OCI-LY7 (cell line): ENCODE measurements at regions of chrX and their contacts with region 1.

Region 1: DNA sequence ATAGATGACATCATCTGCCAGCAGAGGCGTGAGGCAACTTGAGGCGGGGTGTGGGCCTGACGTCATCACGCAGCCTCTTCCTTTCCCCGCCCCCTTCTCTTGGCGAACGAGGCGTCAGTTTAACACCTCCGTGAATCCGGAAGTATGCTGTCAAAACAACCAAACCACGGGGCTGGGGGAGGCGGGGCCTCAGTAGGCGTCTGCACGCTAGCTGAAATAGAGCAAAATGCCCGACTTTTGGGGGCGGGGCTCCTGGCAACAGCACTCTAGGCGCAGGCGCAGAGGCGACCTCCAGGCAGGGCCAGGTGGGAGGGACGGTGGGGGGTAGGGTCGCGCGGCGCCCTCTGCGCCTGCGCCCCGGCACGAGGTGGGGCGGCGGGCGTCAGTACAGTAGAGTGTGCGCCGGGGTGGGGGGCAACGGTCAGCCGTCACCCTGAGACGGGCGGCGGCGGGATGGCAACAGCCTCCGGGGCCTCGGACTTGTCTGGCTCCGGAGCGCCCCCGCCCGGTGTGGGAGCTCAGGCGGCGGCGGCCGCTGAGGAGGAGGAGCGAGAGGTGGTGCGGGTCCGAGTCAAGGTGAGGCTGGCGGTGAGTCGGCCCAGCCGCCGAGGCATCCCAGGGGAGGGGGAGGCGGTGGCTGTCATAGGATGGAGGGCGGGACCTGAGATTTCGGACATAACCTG is at the start of gene TBC1D25:
- DNase-seq: peak; percentile 98
- H3K4me3 ChIP-seq: peak within 1 kb of the TSS; percentile 80
- H3K27ac ChIP-seq: peak within 1 kb of the TSS; percentile 69
- H3K4me1 ChIP-seq: peaks cover 17% of the 10 kb centered on the region
- CTCF ChIP-seq: peak; percentile 66
- total RNA-seq, gene TBC1D25: 6.8 and 7.6 TPM in 2 replicates

Region 2: GRCh38 chrX:48468693-48469691 is 70.5 kb before region 1 on chrX:
- CTCF ChIA-PET with region 1: interaction called, 4 read pairs
- POLR2A ChIA-PET with region 1: interaction called, 6 read pairs
- intact Hi-C with region 1: loop called (anchors 5 kb)
- DNase-seq: peak; percentile 66
- H3K4me3 ChIP-seq: peak overlapping the region; percentile 94
- H3K27ac ChIP-seq: peak overlapping the region; percentile 64
- H3K4me1 ChIP-seq: peaks cover 16% of the 10 kb centered on the region
- CTCF ChIP-seq: peak; percentile 81

Region 3: DNA sequence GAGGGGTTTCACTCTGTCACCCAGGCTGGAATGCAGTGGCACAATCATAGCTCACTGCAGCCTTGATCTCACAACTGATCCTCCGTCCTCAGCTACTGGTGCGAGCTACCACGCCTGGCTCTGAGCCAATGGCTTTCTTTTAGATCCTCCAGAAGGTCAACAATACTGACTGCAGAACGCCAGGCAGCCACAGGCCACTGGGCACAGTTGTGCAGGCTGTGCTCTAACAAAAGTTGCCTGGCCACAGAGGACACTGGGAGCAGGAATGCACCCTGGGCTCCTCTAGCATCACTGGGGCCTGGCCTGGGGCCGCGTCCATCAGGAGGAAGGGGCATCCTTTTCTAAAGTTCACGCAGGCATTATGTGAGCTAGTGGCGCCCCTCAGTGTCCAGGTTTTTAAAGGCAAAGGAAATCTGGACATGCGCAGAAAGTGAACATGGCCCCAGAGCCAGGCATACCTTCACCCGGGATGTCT is 45.6 kb before region 1 on chrX:
- CTCF ChIA-PET with region 1: no interaction called
- POLR2A ChIA-PET with region 1: no interaction called
- intact Hi-C with region 1: no loop called
- DNase-seq: no peak
- H3K4me3 ChIP-seq: no peak overlapping the region
- H3K27ac ChIP-seq: no peak overlapping the region
- H3K4me1 ChIP-seq: no peaks in the 10 kb centered on the region
- CTCF ChIP-seq: peak; percentile 54

Region 4: DNA sequence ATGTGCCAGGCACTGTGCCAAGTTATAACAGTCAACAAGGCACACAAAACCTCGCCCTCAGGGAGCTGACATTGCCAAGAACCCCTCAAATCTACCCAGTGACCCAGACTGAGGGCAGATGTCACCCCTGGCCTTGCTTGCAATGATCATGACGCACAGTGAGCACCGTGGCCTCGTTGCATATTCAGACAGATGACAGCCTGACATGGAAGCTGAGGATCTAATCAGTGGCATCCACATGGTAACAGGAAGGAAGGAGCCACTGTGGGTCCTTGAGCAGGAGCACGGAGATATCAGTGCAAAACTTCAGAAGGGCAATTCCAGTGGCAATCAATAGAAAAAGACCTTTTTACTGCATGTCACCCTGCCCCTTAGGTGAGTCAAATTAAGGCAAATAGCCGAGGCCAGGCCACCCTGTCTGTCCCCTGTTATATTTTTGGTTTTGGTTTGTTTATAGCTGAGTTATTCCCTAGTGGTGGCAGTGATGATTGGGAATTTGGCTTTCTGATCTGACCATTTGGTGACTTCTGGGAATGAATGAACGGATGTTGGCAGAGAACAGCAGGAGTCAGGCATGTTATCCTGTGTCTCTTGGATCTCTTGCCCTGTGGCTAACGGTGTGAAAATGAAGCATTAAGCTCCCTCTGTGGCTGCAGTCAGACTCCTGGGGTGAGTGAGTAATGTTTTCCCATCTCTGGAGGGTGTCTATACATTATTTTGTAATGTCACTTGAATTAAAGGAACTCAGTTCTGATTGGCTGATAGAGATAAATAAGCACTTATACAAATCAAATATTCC is 78.3 kb after region 1 on chrX:
- CTCF ChIA-PET with region 1: no interaction called
- POLR2A ChIA-PET with region 1: no interaction called
- intact Hi-C with region 1: no loop called
- DNase-seq: no peak
- H3K4me3 ChIP-seq: no peak overlapping the region
- H3K27ac ChIP-seq: no peak overlapping the region
- H3K4me1 ChIP-seq: no peaks in the 10 kb centered on the region
- CTCF ChIP-seq: no peak